WTC11 (cell line): ENCODE measurements at regions of chr3 and their contacts with region 1.

Region 1: GRCh38 chr3:33787328-33788009 is 11.0 kb upstream of the PDCD6IP start:
- DNase-seq: peak; percentile 72
- ATAC-seq: peak; percentile 95
- H3K4me3 Mint-ChIP-seq: peak overlapping the region; percentile 37
- H3K27ac Mint-ChIP-seq: no peak overlapping the region
- H3K4me1 Mint-ChIP-seq: peaks cover 25% of the 10 kb centered on the region
- H3K27me3 Mint-ChIP-seq: no peaks in the 10 kb centered on the region; the same call in 1 of the 2 replicates
- CTCF ChIP-seq: peak; percentile 58

Region 2: DNA sequence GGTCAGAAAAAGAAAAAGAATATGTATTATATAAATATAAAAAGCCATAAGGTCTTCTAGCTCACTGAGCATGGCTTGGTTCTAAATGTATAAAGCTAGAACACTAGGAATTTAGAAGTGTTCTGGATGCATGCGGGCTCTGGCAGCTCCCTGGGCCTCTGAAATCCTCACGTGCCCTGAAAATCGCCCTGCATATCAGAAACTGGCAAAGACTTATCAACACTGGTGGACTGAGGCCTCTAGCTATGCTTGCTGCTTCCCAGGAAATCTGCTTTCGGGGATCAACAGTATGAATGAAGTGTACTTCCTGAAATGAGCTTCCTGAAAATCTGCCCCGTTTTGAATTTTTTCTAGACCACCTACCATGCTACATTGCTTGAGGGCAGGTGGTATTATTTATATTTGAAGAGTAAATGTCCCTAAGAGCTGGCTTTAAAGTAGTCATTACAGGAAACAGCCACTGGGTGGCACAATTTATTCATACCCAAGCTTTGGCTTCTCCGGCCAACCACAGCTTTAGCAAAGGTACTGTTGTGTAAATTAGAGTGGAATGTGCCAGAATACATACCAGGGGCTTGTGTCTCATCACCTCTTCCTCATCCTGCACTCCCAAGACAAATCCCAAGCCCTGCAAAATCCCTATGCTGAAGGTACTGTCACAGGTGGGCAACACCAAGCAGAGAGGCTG is 656.0 kb before region 1 on chr3:
- CTCF ChIA-PET with region 1: interaction called, 20 read pairs
- POLR2A ChIA-PET with region 1: no interaction called
- DNase-seq: peak; percentile 63
- ATAC-seq: peak; percentile 97
- H3K4me3 Mint-ChIP-seq: no peak overlapping the region
- H3K27ac Mint-ChIP-seq: peak overlapping the region; percentile 71; the same call in 1 of the 2 replicates
- H3K4me1 Mint-ChIP-seq: peaks cover 16% of the 10 kb centered on the region
- H3K27me3 Mint-ChIP-seq: no peaks in the 10 kb centered on the region
- CTCF ChIP-seq: peak; percentile 52

Region 3: GRCh38 chr3:33440323-33441232 is 346.9 kb before region 1 on chr3 and contains the start of gene UBP1:
- CTCF ChIA-PET with region 1: interaction called, 10 read pairs
- POLR2A ChIA-PET with region 1: no interaction called
- DNase-seq: peak; percentile 97
- ATAC-seq: peak; percentile 93
- H3K4me3 Mint-ChIP-seq: peak within 1 kb of the TSS; percentile 98
- H3K27ac Mint-ChIP-seq: peak within 1 kb of the TSS; percentile 100
- H3K4me1 Mint-ChIP-seq: peaks cover 41% of the 10 kb centered on the region
- H3K27me3 Mint-ChIP-seq: no peaks in the 10 kb centered on the region; the same call in 1 of the 2 replicates
- CTCF ChIP-seq: no peak
- total RNA-seq, gene UBP1: 68.5 to 72.6 TPM (median 69.6 TPM) in 3 replicates

Region 4: DNA sequence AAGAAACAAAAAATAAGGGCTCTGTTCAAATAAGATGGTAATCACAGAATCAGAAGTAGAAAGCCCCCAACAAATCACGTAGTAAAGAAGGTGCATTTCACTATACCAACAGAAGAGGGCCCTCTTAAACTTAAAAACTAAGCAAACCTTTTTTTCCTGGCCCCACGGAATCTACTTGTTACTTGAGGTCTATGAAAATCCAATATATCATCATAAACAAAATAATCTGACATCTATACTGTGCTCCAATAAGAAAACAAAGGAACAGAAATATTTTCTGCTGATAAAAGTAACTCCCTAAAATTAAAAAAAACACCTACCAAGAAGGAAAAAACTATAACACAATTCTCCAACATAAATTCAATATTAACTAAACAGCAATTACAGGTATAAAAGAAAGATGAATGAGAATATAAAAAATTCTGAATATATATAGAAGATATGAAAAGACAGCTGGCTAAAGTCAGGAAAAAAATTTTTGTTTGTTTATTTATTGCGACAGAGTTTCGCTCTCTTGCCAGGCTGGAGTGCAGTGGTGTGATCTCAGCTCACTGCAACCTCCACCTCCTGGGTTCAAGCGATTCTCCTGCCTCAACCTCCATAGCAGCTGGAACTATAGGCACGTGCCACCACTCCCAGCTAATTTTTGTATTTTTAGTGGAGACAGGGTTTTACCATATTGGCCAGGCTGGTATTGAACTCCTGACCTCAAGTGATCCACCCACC is 151.2 kb before region 1 on chr3:
- CTCF ChIA-PET with region 1: interaction called, 47 read pairs
- POLR2A ChIA-PET with region 1: no interaction called
- DNase-seq: no peak
- ATAC-seq: peak; percentile 48; the same call in 1 of the 2 replicates
- H3K4me3 Mint-ChIP-seq: no peak overlapping the region
- H3K27ac Mint-ChIP-seq: no peak overlapping the region
- H3K4me1 Mint-ChIP-seq: peaks cover 15% of the 10 kb centered on the region
- H3K27me3 Mint-ChIP-seq: no peaks in the 10 kb centered on the region
- CTCF ChIP-seq: peak; percentile 35

Region 5: DNA sequence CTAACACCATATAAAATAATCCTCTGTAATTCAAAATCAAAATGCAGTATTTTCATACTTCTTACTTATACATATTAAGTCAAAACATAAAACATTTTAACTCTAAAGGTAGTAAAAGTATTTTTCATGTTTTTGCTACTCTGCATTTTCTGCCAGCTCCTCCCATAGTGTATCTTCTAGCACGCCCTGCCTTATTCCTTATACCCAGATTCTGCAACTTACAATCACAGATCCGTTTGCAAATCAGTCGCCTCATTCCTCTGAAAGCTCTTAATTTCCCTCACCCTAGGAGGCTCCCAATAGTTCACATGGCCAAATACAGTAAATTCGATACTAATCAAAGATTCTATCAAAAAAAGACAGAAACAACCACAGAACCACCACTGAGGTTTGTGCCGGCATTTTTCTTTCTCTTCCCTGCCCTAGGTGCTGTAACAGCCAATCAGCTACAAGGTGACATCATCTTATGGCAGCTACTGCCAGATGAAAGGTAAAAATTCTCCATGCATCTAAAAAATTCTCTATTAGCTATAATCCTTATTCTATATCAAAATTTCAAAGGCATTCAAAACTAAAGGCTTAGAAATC is 142.3 kb before region 1 on chr3:
- CTCF ChIA-PET with region 1: interaction called, 17 read pairs
- POLR2A ChIA-PET with region 1: no interaction called
- DNase-seq: no peak
- ATAC-seq: peak; percentile 85
- H3K4me3 Mint-ChIP-seq: peak overlapping the region; percentile 57
- H3K27ac Mint-ChIP-seq: peak overlapping the region; percentile 77
- H3K4me1 Mint-ChIP-seq: peaks cover 31% of the 10 kb centered on the region
- H3K27me3 Mint-ChIP-seq: no peaks in the 10 kb centered on the region
- CTCF ChIP-seq: no peak

Region 6: GRCh38 chr3:33658991-33659848 is 128.2 kb before region 1 on chr3:
- CTCF ChIA-PET with region 1: interaction called, 14 read pairs
- POLR2A ChIA-PET with region 1: interaction called, 8 read pairs
- DNase-seq: peak; percentile 62
- ATAC-seq: peak; percentile 96
- H3K4me3 Mint-ChIP-seq: peak overlapping the region; percentile 49
- H3K27ac Mint-ChIP-seq: peak overlapping the region; percentile 97
- H3K4me1 Mint-ChIP-seq: peaks cover 38% of the 10 kb centered on the region
- H3K27me3 Mint-ChIP-seq: no peaks in the 10 kb centered on the region
- CTCF ChIP-seq: no peak

Region 7: GRCh38 chr3:33798411-33799201 is 11.1 kb after region 1 on chr3 and contains the start of gene PDCD6IP:
- CTCF ChIA-PET with region 1: interaction called, 33 read pairs
- POLR2A ChIA-PET with region 1: interaction called, 8 read pairs
- DNase-seq: peak; percentile 91
- ATAC-seq: peak; percentile 95
- H3K4me3 Mint-ChIP-seq: peak within 1 kb of the TSS; percentile 98
- H3K27ac Mint-ChIP-seq: peak within 1 kb of the TSS; percentile 94
- H3K4me1 Mint-ChIP-seq: peaks cover 42% of the 10 kb centered on the region
- H3K27me3 Mint-ChIP-seq: no peaks in the 10 kb centered on the region
- CTCF ChIP-seq: no peak
- total RNA-seq, gene PDCD6IP: 142 to 173 TPM (median 145 TPM) in 3 replicates